ENCODE measurements at regions of chr5 and their contacts with region 1.

Region 1: GRCh38 chr5:53884844-53885243 is 324.4 kb downstream of the NDUFS4 start:
- DNase-seq: no peak
- ATAC-seq: no peak
- H3K4me3 Mint-ChIP-seq: no peak overlapping the region
- H3K27ac Mint-ChIP-seq: no peak overlapping the region
- H3K4me1 Mint-ChIP-seq: no peaks in the 10 kb centered on the region
- H3K27me3 Mint-ChIP-seq: no peaks in the 10 kb centered on the region
- CTCF ChIP-seq: no peak

Region 2: DNA sequence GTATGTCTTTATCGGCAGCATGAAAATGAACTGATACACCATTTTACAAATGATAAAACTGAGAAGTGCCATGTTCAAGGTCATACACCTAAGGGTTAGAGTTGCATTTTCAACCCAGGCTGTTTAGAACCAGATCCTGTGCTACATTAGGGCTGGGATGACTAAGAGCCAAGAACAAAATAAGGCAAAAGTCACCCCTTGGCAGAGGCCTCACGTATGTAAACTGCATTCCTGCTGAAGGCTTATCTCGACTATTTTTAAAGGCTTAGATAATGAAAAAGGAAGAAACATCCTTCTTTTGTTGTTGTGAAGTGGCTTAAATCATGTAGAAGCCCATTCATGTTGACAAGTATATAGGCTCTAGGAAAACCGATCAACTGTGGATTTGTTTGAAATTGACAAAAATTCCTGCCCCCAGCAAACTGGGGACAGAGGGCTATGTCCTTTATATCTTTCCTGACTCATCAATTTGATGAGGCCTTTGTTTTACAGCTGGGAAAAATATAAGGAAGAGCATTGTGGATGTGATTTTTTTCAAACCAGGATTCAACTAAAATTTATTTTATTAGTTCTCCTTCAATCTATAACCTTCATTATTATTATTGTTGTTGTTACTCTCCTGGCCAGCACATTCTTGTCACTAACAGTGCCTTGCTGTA is 829.2 kb after region 1 on chr5:
- CTCF ChIA-PET with region 1: no interaction called
- POLR2A ChIA-PET with region 1: interaction called, 10 read pairs
- intact Hi-C with region 1: no loop called
- DNase-seq: no peak
- ATAC-seq: no peak
- H3K4me3 Mint-ChIP-seq: no peak overlapping the region
- H3K27ac Mint-ChIP-seq: no peak overlapping the region
- H3K4me1 Mint-ChIP-seq: peaks cover 16% of the 10 kb centered on the region
- H3K27me3 Mint-ChIP-seq: peaks cover 2% of the 10 kb centered on the region
- CTCF ChIP-seq: no peak

Region 3: GRCh38 chr5:54753034-54753433 is 868.2 kb after region 1 on chr5:
- CTCF ChIA-PET with region 1: no interaction called
- POLR2A ChIA-PET with region 1: no interaction called
- intact Hi-C with region 1: no loop called
- DNase-seq: no peak
- ATAC-seq: peak; percentile 90
- H3K4me3 Mint-ChIP-seq: peak overlapping the region; percentile 72
- H3K27ac Mint-ChIP-seq: peak overlapping the region; percentile 81
- H3K4me1 Mint-ChIP-seq: peaks cover 60% of the 10 kb centered on the region
- H3K27me3 Mint-ChIP-seq: no peaks in the 10 kb centered on the region
- CTCF ChIP-seq: no peak

Region 4: GRCh38 chr5:55320571-55320970 is 1435.7 kb after region 1 on chr5:
- CTCF ChIA-PET with region 1: no interaction called
- POLR2A ChIA-PET with region 1: no interaction called
- intact Hi-C with region 1: no loop called
- DNase-seq: no peak
- ATAC-seq: no peak
- H3K4me3 Mint-ChIP-seq: no peak overlapping the region
- H3K27ac Mint-ChIP-seq: no peak overlapping the region
- H3K4me1 Mint-ChIP-seq: peaks cover 17% of the 10 kb centered on the region
- H3K27me3 Mint-ChIP-seq: no peaks in the 10 kb centered on the region
- CTCF ChIP-seq: no peak